PC-3 (cell line): ENCODE measurements at regions of chr15 and their contacts with region 1.

Region 1: GRCh38 chr15:41806291-41807181 is 21.4 kb upstream of the JMJD7 start:
- DNase-seq: peak; percentile 75
- ATAC-seq: no peak
- H3K4me3 ChIP-seq: no peak overlapping the region
- H3K27ac ChIP-seq: no peak overlapping the region
- H3K4me1 ChIP-seq: peaks cover 35% of the 10 kb centered on the region
- H3K27me3 ChIP-seq: no peaks in the 10 kb centered on the region
- CTCF ChIP-seq: peak; percentile 48

Region 2: GRCh38 chr15:41779662-41780157 is 26.8 kb before region 1 on chr15:
- CTCF ChIA-PET with region 1: interaction called, 76 read pairs
- POLR2A ChIA-PET with region 1: no interaction called
- intact Hi-C with region 1: loop called (anchors 1 kb)
- DNase-seq: no peak
- ATAC-seq: no peak
- H3K4me3 ChIP-seq: no peak overlapping the region
- H3K27ac ChIP-seq: no peak overlapping the region
- H3K4me1 ChIP-seq: peaks cover 53% of the 10 kb centered on the region
- H3K27me3 ChIP-seq: no peaks in the 10 kb centered on the region
- CTCF ChIP-seq: no peak